ENCODE measurements at regions of chr16 and their contacts with region 1.

Region 1: DNA sequence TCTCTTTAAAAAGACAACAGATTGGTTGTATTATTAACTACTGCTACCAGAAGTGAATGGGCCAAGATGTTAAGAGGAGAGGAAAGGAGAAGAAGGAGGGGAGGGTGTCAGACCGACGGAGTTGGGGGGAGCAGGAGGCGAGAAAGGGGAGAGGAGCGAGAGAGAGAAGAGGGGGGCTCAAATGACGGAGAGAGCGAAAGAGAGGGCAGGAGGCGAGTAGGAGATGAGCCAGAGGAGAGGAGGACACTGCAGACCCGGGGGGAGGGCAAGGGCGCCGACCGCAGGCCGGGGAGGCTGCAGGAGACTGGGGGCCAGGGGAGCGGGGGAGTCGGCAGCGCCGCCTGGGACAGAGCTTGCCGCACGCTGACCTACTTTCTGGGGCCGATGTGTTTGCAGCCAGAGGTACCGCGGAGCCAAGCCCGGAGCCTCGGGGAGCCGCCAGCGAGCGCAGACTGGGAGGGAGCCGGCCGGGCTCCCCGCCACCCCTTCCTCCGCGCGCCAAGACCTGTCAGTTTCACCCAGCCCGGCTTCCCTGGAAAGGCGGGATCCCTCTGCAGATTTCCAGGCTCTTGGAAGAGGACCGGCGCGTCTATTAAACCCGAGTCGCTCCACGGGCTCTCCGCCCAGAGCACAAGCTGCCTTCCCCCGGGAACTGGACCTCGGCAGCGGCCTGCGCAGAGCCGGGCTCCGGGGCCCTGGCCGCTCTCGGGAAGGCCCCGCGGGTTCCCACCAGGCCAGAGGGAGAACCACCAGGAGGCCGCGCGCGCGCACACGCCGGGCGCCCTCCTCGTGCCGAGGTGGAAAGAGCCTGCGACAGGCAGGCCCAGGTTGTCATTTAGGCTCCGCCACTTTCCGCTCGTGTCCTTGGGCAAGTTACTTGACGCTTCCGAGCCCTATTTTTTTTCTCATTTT is 74.6 kb downstream of the CMC2 start:
- DNase-seq: peak in 1 of 2 experiments; percentile 25
- H3K4me3 ChIP-seq: peak overlapping the region; percentile 40; the same call in 1 of the 2 replicates
- H3K27ac ChIP-seq: no peak overlapping the region
- H3K4me1 ChIP-seq: peaks cover 7% of the 10 kb centered on the region; the same call in 1 of the 2 replicates
- H3K27me3 ChIP-seq: peaks cover 53% of the 10 kb centered on the region
- CTCF ChIP-seq: no peak

Region 2: GRCh38 chr16:80993307-80993706 is 61.2 kb after region 1 on chr16:
- CTCF ChIA-PET with region 1: no interaction called
- POLR2A ChIA-PET with region 1: interaction called, 6 read pairs
- intact Hi-C with region 1: loop called (anchors 5 kb)
- DNase-seq: peak; percentile 67 to 84
- H3K4me3 ChIP-seq: peak overlapping the region; percentile 19; the same call in 1 of the 2 replicates
- H3K27ac ChIP-seq: peak overlapping the region; percentile 73
- H3K4me1 ChIP-seq: peaks cover 18% of the 10 kb centered on the region; the same call in 1 of the 2 replicates
- H3K27me3 ChIP-seq: no peaks in the 10 kb centered on the region
- CTCF ChIP-seq: no peak